ENCODE measurements at regions of chr5 and their contacts with region 1.

Region 1: GRCh38 chr5:41270423-41271251 is 57.3 kb upstream of the C6 start:
- DNase-seq: no peak
- H3K4me3 ChIP-seq: no peak overlapping the region
- H3K27ac ChIP-seq: no peak overlapping the region
- H3K4me1 ChIP-seq: no peaks in the 10 kb centered on the region
- H3K27me3 ChIP-seq: no peaks in the 10 kb centered on the region
- CTCF ChIP-seq: peak in 2 of 3 experiments; percentile 74 to 77; a peak in 3 of 4 replicates
- EP300 ChIP-seq: no peak
- POLR2A ChIP-seq: no peak
- RAD21 ChIP-seq: peak; percentile 83 to 90

Region 2: GRCh38 chr5:40904205-40904993 is 366.2 kb before region 1 on chr5:
- CTCF ChIA-PET with region 1: interaction called, 14 read pairs
- POLR2A ChIA-PET with region 1: no interaction called
- DNase-seq: peak; percentile 68 to 74
- H3K4me3 ChIP-seq: no peak overlapping the region
- H3K27ac ChIP-seq: no peak overlapping the region
- H3K4me1 ChIP-seq: peaks cover 0 to 5% (median 2%) of the 10 kb centered on the region in 4 experiments; a peak in 2 of 7 replicates
- H3K27me3 ChIP-seq: no peaks in the 10 kb centered on the region
- CTCF ChIP-seq: peak; percentile 67 to 98 (median 90)
- EP300 ChIP-seq: no peak
- POLR2A ChIP-seq: no peak
- RAD21 ChIP-seq: peak; percentile 99

Region 3: DNA sequence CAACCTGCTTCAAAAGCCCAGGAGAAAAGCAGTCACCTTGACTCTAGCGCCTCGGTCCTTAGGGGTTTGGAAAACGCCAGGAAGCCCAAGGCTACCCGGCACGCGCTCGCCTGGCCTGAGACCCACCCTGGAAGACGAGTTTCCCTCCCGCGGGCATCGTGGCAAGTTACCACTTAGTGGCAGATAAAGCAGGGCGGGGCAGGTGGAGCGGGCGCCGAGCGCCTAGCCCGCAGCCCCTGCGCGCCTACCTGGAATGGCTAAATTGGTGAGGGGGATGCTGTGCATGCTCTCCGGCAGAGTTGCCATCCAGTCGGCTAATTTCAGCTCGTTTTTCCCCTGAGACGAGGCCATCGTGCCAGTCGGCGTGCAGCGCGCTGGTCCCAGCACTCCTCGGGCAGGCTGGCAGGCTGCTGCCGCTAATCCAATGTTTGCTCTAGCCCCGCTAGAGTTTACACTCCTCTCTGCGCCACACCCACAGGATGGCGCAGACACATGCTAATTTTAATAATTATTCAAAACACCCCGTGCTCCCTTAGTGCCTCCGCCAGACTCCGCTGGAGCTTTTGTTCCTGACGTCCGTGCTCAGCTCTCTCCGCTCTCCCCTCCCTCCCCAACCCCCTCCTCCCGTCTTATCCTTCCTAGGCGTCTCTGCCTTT is 239.7 kb after region 1 on chr5 and contains the start of gene PLCXD3:
- CTCF ChIA-PET with region 1: interaction called, 14 read pairs
- POLR2A ChIA-PET with region 1: no interaction called
- DNase-seq: peak in 1 of 2 experiments; percentile 63
- H3K4me3 ChIP-seq: peak within 1 kb of the TSS; percentile 58 to 68 (median 63)
- H3K27ac ChIP-seq: no peak within 1 kb of the TSS
- H3K4me1 ChIP-seq: peaks cover 0 to 10% (median 3%) of the 10 kb centered on the region in 4 experiments; a peak in 4 of 7 replicates
- H3K27me3 ChIP-seq: peaks cover 7 to 27% (median 24%) of the 10 kb centered on the region in 4 experiments
- CTCF ChIP-seq: no peak
- EP300 ChIP-seq: no peak
- POLR2A ChIP-seq: no peak
- RAD21 ChIP-seq: no peak
- total RNA-seq, gene PLCXD3: 0.07 and 0.10 TPM in 2 replicates

Region 4: GRCh38 chr5:41524174-41524573 is 253.5 kb after region 1 on chr5:
- CTCF ChIA-PET with region 1: interaction called, 28 read pairs
- POLR2A ChIA-PET with region 1: no interaction called
- DNase-seq: no peak
- H3K4me3 ChIP-seq: no peak overlapping the region
- H3K27ac ChIP-seq: no peak overlapping the region
- H3K4me1 ChIP-seq: no peaks in the 10 kb centered on the region
- H3K27me3 ChIP-seq: no peaks in the 10 kb centered on the region
- CTCF ChIP-seq: peak in 2 of 3 experiments; percentile 58 to 65; a peak in 3 of 4 replicates
- EP300 ChIP-seq: no peak
- POLR2A ChIP-seq: no peak
- RAD21 ChIP-seq: peak; percentile 79 to 84

Region 5: GRCh38 chr5:41636605-41637004 is 366.0 kb after region 1 on chr5:
- CTCF ChIA-PET with region 1: interaction called, 29 read pairs
- POLR2A ChIA-PET with region 1: no interaction called
- DNase-seq: peak in 1 of 2 experiments; percentile 52
- H3K4me3 ChIP-seq: no peak overlapping the region
- H3K27ac ChIP-seq: no peak overlapping the region
- H3K4me1 ChIP-seq: peaks cover 0 to 3% (median 0%) of the 10 kb centered on the region in 4 experiments; a peak in 2 of 7 replicates
- H3K27me3 ChIP-seq: no peaks in the 10 kb centered on the region
- CTCF ChIP-seq: peak in 2 of 3 experiments; percentile 35 to 60; a peak in 3 of 4 replicates
- EP300 ChIP-seq: no peak
- POLR2A ChIP-seq: no peak
- RAD21 ChIP-seq: peak; percentile 20 to 42; a peak in 3 of 4 replicates